Panc1 (cell line): ENCODE measurements at regions of chr19 and their contacts with region 1.

Region 1: GRCh38 chr19:38544034-38544958 is 73.5 kb downstream of the MAP4K1 start:
- DNase-seq: peak; percentile 95
- ATAC-seq: peak; percentile 93
- H3K4me3 ChIP-seq: peak overlapping the region; percentile 25 to 50
- H3K27ac ChIP-seq: peak overlapping the region; percentile 32
- H3K4me1 ChIP-seq: peaks cover 15% of the 10 kb centered on the region
- H3K27me3 ChIP-seq: peaks cover 3% of the 10 kb centered on the region; the same call in 1 of the 2 replicates
- CTCF ChIP-seq: no peak

Region 2: GRCh38 chr19:38506723-38507550 is 37.4 kb before region 1 on chr19:
- CTCF ChIA-PET with region 1: no interaction called
- POLR2A ChIA-PET with region 1: no interaction called
- in situ Hi-C with region 1: loop called (anchors 5 kb)
- intact Hi-C with region 1: no loop called
- DNase-seq: peak; percentile 100
- ATAC-seq: peak; percentile 86
- H3K4me3 ChIP-seq: peak overlapping the region; percentile 29 to 64
- H3K27ac ChIP-seq: peak overlapping the region; percentile 58
- H3K4me1 ChIP-seq: peaks cover 8% of the 10 kb centered on the region
- H3K27me3 ChIP-seq: 0 out of 2 replicates have a peak, but pooled peaks cover 3% of the 10 kb centered on the region
- CTCF ChIP-seq: no peak

Region 3: DNA sequence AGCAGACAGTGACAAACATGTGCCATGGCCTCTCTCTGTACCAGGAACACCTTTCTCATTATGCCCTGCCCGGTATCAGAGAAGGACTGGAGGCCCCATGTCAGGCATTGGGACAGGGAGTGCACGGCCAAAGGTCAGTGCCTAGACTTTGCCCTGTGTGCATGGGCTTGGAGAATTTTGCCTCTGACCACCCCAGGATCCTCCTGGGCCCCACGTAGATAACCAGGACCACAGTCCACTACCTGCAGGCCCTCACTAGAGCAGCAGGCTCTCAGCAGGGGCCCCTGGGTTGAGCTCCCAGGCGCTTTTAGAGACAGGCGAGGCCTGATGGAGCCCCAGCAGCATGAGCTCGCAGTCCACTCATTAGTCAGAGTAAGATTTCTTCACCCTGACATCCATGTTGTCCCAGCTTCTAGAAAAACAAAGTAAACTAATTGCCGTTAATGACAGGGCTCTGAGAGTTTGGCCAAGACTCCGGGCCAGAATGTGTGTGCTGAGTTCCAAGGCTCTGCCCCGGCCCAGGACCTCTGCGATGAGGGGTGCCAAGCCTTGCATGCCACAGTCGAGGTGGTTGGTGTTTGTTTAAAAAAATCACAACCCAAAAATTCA is 157.3 kb after region 1 on chr19:
- CTCF ChIA-PET with region 1: no interaction called
- POLR2A ChIA-PET with region 1: no interaction called
- in situ Hi-C with region 1: loop called (anchors 5 kb)
- intact Hi-C with region 1: no loop called
- DNase-seq: no peak
- ATAC-seq: peak; percentile 4; the same call in 1 of the 2 replicates
- H3K4me3 ChIP-seq: no peak overlapping the region
- H3K27ac ChIP-seq: peak overlapping the region; percentile 98
- H3K4me1 ChIP-seq: peaks cover 88% of the 10 kb centered on the region
- H3K27me3 ChIP-seq: no peaks in the 10 kb centered on the region
- CTCF ChIP-seq: no peak

Region 4: GRCh38 chr19:38769635-38770211 is 225.4 kb after region 1 on chr19:
- CTCF ChIA-PET with region 1: interaction called, 11 read pairs
- POLR2A ChIA-PET with region 1: no interaction called
- in situ Hi-C with region 1: no loop called
- intact Hi-C with region 1: no loop called
- DNase-seq: no peak
- ATAC-seq: peak; percentile 62
- H3K4me3 ChIP-seq: no peak overlapping the region
- H3K27ac ChIP-seq: peak overlapping the region; percentile 48; the same call in 1 of the 2 replicates
- H3K4me1 ChIP-seq: peaks cover 4% of the 10 kb centered on the region; the same call in 1 of the 2 replicates
- H3K27me3 ChIP-seq: no peaks in the 10 kb centered on the region
- CTCF ChIP-seq: no peak; the same call in 1 of the 2 replicates

Region 5: GRCh38 chr19:39277612-39278011 is 733.3 kb after region 1 on chr19:
- CTCF ChIA-PET with region 1: no interaction called
- POLR2A ChIA-PET with region 1: no interaction called
- in situ Hi-C with region 1: loop called (anchors 10 kb)
- intact Hi-C with region 1: no loop called
- DNase-seq: no peak
- ATAC-seq: peak; percentile 27
- H3K4me3 ChIP-seq: no peak overlapping the region
- H3K27ac ChIP-seq: no peak overlapping the region
- H3K4me1 ChIP-seq: no peaks in the 10 kb centered on the region
- H3K27me3 ChIP-seq: peaks cover 8% of the 10 kb centered on the region; the same call in 1 of the 2 replicates
- CTCF ChIP-seq: no peak